ENCODE measurements at regions of chr3 and their contacts with region 1.

Region 1: DNA sequence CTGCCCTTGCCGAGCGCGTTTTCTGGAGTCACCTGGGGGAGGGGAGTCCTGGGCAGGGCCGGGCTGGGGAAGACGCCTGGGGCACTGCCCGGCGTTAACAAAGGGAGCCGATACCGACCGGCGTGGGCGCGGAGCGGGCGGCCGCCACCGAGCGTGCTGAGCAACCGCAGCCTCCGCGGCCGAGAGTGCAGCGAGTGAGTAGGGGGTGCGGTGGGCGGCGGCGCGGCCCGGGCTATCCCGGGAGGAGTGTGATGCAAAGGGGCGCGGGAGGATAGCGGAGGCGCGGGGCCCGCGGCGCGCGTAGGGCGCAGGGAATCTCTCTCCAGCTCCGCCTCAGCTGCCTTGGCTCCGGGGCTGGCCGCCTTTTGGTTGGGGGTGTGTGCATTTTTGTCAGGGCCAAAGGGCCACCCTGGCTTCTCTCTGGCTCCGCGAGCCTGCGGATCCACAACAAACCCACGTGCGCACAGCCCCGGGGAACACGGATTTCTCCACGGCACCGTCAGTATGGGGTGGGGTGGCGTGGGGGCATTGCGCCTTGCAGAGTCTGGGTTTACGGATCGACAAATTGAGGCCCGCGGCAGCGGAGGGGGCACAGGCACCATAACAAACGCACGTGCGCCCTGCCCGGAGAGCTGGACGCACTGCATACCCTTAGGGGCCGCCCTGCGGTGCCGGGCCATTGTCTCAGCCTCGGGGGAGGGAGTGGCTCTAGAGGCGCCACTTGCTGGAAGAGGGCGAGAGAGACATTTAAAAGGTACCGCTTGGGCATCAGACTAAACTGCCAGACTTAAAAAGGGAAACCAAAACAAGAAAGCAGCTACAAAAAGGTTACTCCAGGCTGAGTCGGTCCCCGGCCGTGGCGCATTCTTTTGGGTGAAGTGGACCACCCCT is 560 bp downstream of the ST6GAL1 start:
- DNase-seq: peak; percentile 77
- H3K4me3 Mint-ChIP-seq: peak overlapping the region; percentile 84
- H3K27ac Mint-ChIP-seq: peak overlapping the region; percentile 88
- H3K4me1 Mint-ChIP-seq: peaks cover 39% of the 10 kb centered on the region
- H3K27me3 Mint-ChIP-seq: no peaks in the 10 kb centered on the region

Region 2: GRCh38 chr3:186806089-186807055 is 124.5 kb before region 1 on chr3 and contains the start of gene RFC4:
- CTCF ChIA-PET with region 1: interaction called, 3 read pairs
- POLR2A ChIA-PET with region 1: interaction called, 12 read pairs
- DNase-seq: peak; percentile 87
- H3K4me3 Mint-ChIP-seq: peak within 1 kb of the TSS; percentile 97
- H3K27ac Mint-ChIP-seq: peak within 1 kb of the TSS; percentile 94
- H3K4me1 Mint-ChIP-seq: peaks cover 45% of the 10 kb centered on the region
- H3K27me3 Mint-ChIP-seq: no peaks in the 10 kb centered on the region
- total RNA-seq, gene RFC4: 85.5 to 89.3 TPM

Region 3: GRCh38 chr3:186882881-186883685 is 47.8 kb before region 1 on chr3:
- CTCF ChIA-PET with region 1: interaction called, 33 read pairs
- POLR2A ChIA-PET with region 1: interaction called, 55 read pairs
- DNase-seq: peak; percentile 60
- H3K4me3 Mint-ChIP-seq: peak overlapping the region; percentile 33
- H3K27ac Mint-ChIP-seq: peak overlapping the region; percentile 85
- H3K4me1 Mint-ChIP-seq: peaks cover 52% of the 10 kb centered on the region
- H3K27me3 Mint-ChIP-seq: no peaks in the 10 kb centered on the region

Region 4: DNA sequence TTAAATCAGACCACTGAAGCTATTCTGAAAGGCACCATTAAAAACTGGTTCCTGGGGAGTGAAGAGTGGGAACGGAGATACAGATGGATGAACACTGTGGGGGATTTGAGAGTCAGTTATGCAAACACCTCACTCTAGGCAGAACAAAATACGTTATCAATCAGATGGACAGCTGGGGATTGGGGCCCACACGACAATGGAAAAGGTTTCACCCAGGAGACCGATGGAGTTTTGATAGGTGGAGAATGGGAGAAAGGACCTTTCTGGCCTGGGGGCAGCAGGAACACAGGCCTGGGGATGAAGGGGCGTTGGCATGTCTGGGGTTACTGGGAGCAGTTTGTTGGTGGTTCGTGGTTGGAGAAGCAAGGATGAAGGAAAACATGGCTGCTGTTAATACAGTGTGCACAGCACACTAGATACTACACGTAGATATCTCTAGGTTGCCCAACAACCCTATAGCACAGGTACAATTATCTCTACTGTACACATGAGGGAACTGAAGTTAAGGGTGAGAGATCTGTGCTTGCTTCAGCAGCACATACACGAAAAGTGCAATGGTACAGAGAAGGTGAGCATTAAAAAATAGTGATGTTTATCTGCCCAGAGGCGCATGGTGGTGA is 16.0 kb after region 1 on chr3:
- CTCF ChIA-PET with region 1: interaction called, 4 read pairs
- POLR2A ChIA-PET with region 1: interaction called, 27 read pairs
- DNase-seq: no peak
- H3K4me3 Mint-ChIP-seq: no peak overlapping the region
- H3K27ac Mint-ChIP-seq: peak overlapping the region; percentile 18
- H3K4me1 Mint-ChIP-seq: peaks cover 41% of the 10 kb centered on the region
- H3K27me3 Mint-ChIP-seq: no peaks in the 10 kb centered on the region

Region 5: GRCh38 chr3:187006864-187007630 is 76.2 kb after region 1 on chr3:
- CTCF ChIA-PET with region 1: no interaction called
- POLR2A ChIA-PET with region 1: interaction called, 12 read pairs
- DNase-seq: no peak
- H3K4me3 Mint-ChIP-seq: peak overlapping the region; percentile 3
- H3K27ac Mint-ChIP-seq: peak overlapping the region; percentile 71
- H3K4me1 Mint-ChIP-seq: peaks cover 68% of the 10 kb centered on the region
- H3K27me3 Mint-ChIP-seq: no peaks in the 10 kb centered on the region

Region 6: GRCh38 chr3:187066228-187066995 is 135.5 kb after region 1 on chr3:
- CTCF ChIA-PET with region 1: interaction called, 4 read pairs
- POLR2A ChIA-PET with region 1: interaction called, 10 read pairs
- DNase-seq: peak; percentile 45
- H3K4me3 Mint-ChIP-seq: no peak overlapping the region
- H3K27ac Mint-ChIP-seq: peak overlapping the region; percentile 22
- H3K4me1 Mint-ChIP-seq: peaks cover 43% of the 10 kb centered on the region
- H3K27me3 Mint-ChIP-seq: no peaks in the 10 kb centered on the region